T-cell (primary cell): ENCODE measurements at regions of chr11 and their contacts with region 1.

Region 1: DNA sequence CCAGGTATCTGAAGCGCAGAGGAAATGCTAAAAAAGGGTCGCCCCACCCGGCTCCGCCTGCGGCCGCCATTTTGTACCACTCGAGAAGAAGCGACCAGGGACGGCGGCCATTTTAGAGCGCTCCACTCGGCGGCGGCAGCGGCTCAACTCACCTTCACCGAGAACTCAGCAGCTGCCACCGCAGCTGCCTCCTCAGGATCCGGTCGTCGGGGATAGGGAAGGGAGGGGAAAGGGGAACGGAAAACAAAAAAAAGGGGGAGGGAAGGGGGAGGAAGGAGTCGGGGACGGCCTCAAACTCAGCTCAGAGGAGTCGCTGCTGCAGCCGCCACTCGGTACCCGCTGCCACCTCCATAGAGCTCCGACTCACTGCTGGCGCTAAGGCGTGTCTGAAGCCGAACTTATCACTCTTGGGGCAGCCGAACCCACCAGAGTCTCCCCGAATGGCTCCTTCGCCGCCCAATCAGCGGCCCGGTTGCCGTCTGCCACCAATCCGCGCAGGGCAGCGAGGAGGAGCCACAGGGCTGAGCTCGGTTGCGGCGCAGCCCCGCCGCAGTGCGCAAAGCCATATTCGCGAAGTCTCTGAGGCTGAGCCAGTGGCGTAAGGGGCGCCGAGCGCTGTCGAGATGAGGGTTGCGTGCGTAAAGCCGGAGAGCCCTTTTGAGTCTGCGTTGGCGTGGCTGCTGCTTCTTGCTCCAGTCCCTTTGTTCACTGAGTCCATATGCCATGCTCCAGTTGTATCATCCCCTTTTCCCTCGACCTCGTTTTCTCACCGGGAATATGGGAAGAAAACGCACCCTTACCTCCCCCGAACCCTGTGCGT is at the start of gene EIF4G2:
- DNase-seq: peak; percentile 95 to 100 (median 98)
- ATAC-seq: peak; percentile 90 to 91 (median 91)
- H3K4me3 ChIP-seq: peak within 1 kb of the TSS; percentile 94
- H3K4me3 Mint-ChIP-seq: peak within 1 kb of the TSS; percentile 91 to 95 (median 94)
- H3K27ac ChIP-seq: peak within 1 kb of the TSS; percentile 95
- H3K27ac Mint-ChIP-seq: peak within 1 kb of the TSS; percentile 98
- H3K4me1 ChIP-seq: peaks cover 24 to 27% of the 10 kb centered on the region in 2 experiments
- H3K4me1 Mint-ChIP-seq: peaks cover 43 to 52% (median 48%) of the 10 kb centered on the region in 3 donors
- H3K27me3 ChIP-seq: peaks cover 0 to 4% of the 10 kb centered on the region in 2 experiments
- H3K27me3 Mint-ChIP-seq: no peaks in the 10 kb centered on the region
- total RNA-seq, gene EIF4G2: 575 to 1,022 (median 643) TPM

Region 2: GRCh38 chr11:10653926-10654810 is 154.6 kb before region 1 on chr11:
- CTCF ChIA-PET with region 1: no interaction called
- POLR2A ChIA-PET with region 1: no interaction called
- DNase-seq: peak in 22 of 35 experiments; percentile 3 to 75 (median 16)
- ATAC-seq: peak; percentile 61 to 73 (median 72)
- H3K4me3 ChIP-seq: no peak overlapping the region
- H3K4me3 Mint-ChIP-seq: no peak overlapping the region
- H3K27ac ChIP-seq: no peak overlapping the region
- H3K27ac Mint-ChIP-seq: no peak overlapping the region
- H3K4me1 ChIP-seq: peaks cover 0 to 5% of the 10 kb centered on the region in 2 experiments
- H3K4me1 Mint-ChIP-seq: peaks cover 0 to 8% (median 2%) of the 10 kb centered on the region in 3 donors
- H3K27me3 ChIP-seq: no peaks in the 10 kb centered on the region
- H3K27me3 Mint-ChIP-seq: no peaks in the 10 kb centered on the region

Region 3: GRCh38 chr11:10688401-10688800 is 120.4 kb before region 1 on chr11:
- CTCF ChIA-PET with region 1: no interaction called
- POLR2A ChIA-PET with region 1: no interaction called
- DNase-seq: no peak
- ATAC-seq: no peak
- H3K4me3 ChIP-seq: no peak overlapping the region
- H3K4me3 Mint-ChIP-seq: no peak overlapping the region
- H3K27ac ChIP-seq: no peak overlapping the region
- H3K27ac Mint-ChIP-seq: no peak overlapping the region
- H3K4me1 ChIP-seq: no peaks in the 10 kb centered on the region
- H3K4me1 Mint-ChIP-seq: no peaks in the 10 kb centered on the region
- H3K27me3 ChIP-seq: peaks cover 0 to 33% of the 10 kb centered on the region in 2 experiments
- H3K27me3 Mint-ChIP-seq: peaks cover 0 to 17% of the 10 kb centered on the region in 2 donors

Region 4: GRCh38 chr11:10750838-10751580 is 57.8 kb before region 1 on chr11 and contains the start of gene CTR9:
- CTCF ChIA-PET with region 1: interaction called in 1 of 2 experiments, 10 read pairs
- POLR2A ChIA-PET with region 1: interaction called, 4 to 16 read pairs
- DNase-seq: peak; percentile 82 to 94 (median 87)
- ATAC-seq: peak; percentile 90 to 96 (median 95)
- H3K4me3 ChIP-seq: peak within 1 kb of the TSS; percentile 98
- H3K4me3 Mint-ChIP-seq: peak within 1 kb of the TSS; percentile 95 to 96 (median 95)
- H3K27ac ChIP-seq: peak within 1 kb of the TSS; percentile 76
- H3K27ac Mint-ChIP-seq: peak within 1 kb of the TSS; percentile 89 to 94
- H3K4me1 ChIP-seq: peaks cover 11 to 14% of the 10 kb centered on the region in 2 experiments
- H3K4me1 Mint-ChIP-seq: peaks cover 21 to 35% (median 26%) of the 10 kb centered on the region in 3 donors
- H3K27me3 ChIP-seq: no peaks in the 10 kb centered on the region
- H3K27me3 Mint-ChIP-seq: no peaks in the 10 kb centered on the region
- total RNA-seq, gene CTR9: 26.4 to 45.6 (median 42.2) TPM

Region 5: DNA sequence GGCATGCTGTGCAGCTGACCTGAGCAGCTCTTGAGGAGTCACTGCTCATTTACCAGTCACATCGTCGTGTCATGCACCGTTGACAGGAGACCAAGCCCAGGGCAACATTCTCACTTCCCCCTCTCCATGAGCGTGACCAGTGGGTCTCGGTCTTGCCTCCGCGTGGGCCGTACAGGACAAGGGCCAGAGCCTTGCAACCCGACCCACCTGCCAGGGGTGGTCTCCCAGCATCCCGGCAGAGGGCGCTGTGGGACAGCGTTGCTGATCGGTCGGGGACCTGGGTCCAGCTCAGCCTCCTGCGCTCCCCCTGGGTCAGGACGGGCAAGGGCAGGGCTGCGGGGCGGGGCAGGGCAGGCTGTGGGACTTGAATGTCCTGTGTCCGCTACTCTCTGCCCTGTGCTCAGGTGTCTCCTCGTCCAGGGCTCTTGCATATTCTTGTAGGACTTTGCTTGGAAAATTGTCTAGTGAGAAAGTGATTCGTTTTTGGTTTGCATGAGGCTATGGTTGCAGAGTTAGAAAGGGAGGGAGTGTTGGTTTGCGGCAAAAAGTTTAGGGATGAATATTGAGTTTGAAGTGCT is 16.3 kb before region 1 on chr11:
- CTCF ChIA-PET with region 1: interaction called, 4 to 27 read pairs
- POLR2A ChIA-PET with region 1: interaction called, 30 to 57 read pairs
- DNase-seq: peak; percentile 46 to 87 (median 75)
- ATAC-seq: peak; percentile 74 to 91 (median 86)
- H3K4me3 ChIP-seq: no peak overlapping the region
- H3K4me3 Mint-ChIP-seq: peak overlapping the region in 1 of 3 donors; percentile 20
- H3K27ac ChIP-seq: no peak overlapping the region
- H3K27ac Mint-ChIP-seq: no peak overlapping the region
- H3K4me1 ChIP-seq: peaks cover 0 to 20% of the 10 kb centered on the region in 2 experiments
- H3K4me1 Mint-ChIP-seq: peaks cover 23 to 30% (median 28%) of the 10 kb centered on the region in 3 donors
- H3K27me3 ChIP-seq: peaks cover 0 to 11% of the 10 kb centered on the region in 2 experiments
- H3K27me3 Mint-ChIP-seq: peaks cover 0 to 4% of the 10 kb centered on the region in 2 donors

Region 6: GRCh38 chr11:10847960-10848870 is 39.5 kb after region 1 on chr11:
- CTCF ChIA-PET with region 1: interaction called, 7 to 15 read pairs
- POLR2A ChIA-PET with region 1: interaction called, 4 to 16 read pairs
- DNase-seq: no peak
- ATAC-seq: no peak
- H3K4me3 ChIP-seq: no peak overlapping the region
- H3K4me3 Mint-ChIP-seq: no peak overlapping the region
- H3K27ac ChIP-seq: no peak overlapping the region
- H3K27ac Mint-ChIP-seq: no peak overlapping the region
- H3K4me1 ChIP-seq: peaks cover 0 to 5% of the 10 kb centered on the region in 2 experiments
- H3K4me1 Mint-ChIP-seq: peaks cover 17 to 19% (median 17%) of the 10 kb centered on the region in 3 donors
- H3K27me3 ChIP-seq: no peaks in the 10 kb centered on the region
- H3K27me3 Mint-ChIP-seq: no peaks in the 10 kb centered on the region

Region 7: DNA sequence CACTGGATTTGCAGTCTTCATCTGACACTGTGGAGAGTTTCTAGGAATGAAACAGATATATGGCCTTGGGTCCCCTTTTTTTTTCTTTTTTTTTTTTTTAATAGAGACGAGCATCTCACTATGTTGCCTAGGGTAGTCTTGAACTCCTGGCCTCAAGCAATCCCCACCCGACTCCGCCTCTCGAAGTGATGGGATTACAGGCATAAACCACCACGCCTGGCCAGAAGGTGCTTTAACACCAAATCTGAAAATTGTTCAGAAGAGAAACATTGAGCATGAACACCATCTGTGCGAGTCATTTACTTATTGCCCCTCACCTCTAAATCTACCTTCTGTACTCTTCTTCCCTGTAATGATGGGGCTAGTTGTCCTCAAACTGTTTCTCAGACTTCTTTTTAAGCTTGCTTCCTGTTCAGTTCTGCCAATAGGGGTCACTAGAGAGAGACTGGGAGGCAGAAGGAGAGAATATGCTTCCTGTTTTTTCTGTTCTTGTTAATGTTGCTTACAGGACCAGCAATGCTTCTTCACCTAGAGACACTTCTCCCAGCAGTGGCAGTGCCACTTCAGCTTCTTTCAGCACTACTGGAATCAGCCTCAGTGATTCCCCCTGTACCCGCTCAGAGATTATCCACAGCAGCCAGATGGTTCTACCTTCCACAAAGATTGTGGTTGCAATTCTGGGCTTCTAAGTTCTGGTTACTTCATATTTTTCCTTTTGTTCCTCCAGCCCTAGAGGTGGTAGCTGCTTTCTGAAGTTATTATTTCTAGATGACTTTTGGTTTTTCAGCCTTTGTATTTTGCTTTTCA is 69.8 kb after region 1 on chr11:
- CTCF ChIA-PET with region 1: interaction called in 1 of 2 experiments, 15 read pairs
- POLR2A ChIA-PET with region 1: interaction called in 1 of 2 experiments, 4 read pairs
- DNase-seq: peak in 13 of 35 experiments; percentile 3 to 77 (median 21)
- ATAC-seq: peak; percentile 74 to 81 (median 78)
- H3K4me3 ChIP-seq: no peak overlapping the region
- H3K4me3 Mint-ChIP-seq: no peak overlapping the region
- H3K27ac ChIP-seq: no peak overlapping the region
- H3K27ac Mint-ChIP-seq: peak overlapping the region; percentile 77 to 82
- H3K4me1 ChIP-seq: peaks cover 4 to 6% of the 10 kb centered on the region in 2 experiments
- H3K4me1 Mint-ChIP-seq: peaks cover 12 to 32% (median 20%) of the 10 kb centered on the region in 3 donors
- H3K27me3 ChIP-seq: no peaks in the 10 kb centered on the region
- H3K27me3 Mint-ChIP-seq: no peaks in the 10 kb centered on the region

Region 8: DNA sequence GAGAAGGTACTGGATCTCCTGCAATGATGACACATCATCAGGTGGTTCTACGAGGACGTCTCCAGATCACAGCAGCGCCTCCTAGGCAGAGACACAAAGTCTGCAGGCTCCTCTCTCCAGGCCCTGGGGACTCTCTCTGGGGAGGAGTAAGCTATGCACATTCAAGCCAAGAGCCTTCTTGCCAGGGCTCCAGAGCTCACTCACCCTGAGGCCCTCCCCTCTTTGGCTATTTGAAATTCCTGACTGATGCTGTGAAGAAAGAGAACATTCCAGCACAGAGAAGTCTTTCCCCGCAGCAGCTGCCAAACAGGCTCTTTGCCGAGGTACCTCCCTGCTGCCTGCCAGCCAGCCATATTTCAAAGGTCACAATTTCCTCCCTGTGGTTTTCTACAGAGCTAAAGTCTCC is 339.3 kb after region 1 on chr11:
- CTCF ChIA-PET with region 1: interaction called, 3 to 4 read pairs
- POLR2A ChIA-PET with region 1: interaction called, 4 to 13 read pairs
- DNase-seq: peak in 17 of 35 experiments; percentile 7 to 57 (median 31)
- ATAC-seq: no peak
- H3K4me3 ChIP-seq: no peak overlapping the region
- H3K4me3 Mint-ChIP-seq: peak overlapping the region in 2 of 3 donors; percentile 7 to 72
- H3K27ac ChIP-seq: no peak overlapping the region
- H3K27ac Mint-ChIP-seq: peak overlapping the region; percentile 74 to 96
- H3K4me1 ChIP-seq: peaks cover 29 to 44% of the 10 kb centered on the region in 2 experiments
- H3K4me1 Mint-ChIP-seq: peaks cover 48 to 78% (median 59%) of the 10 kb centered on the region in 3 donors
- H3K27me3 ChIP-seq: no peaks in the 10 kb centered on the region
- H3K27me3 Mint-ChIP-seq: no peaks in the 10 kb centered on the region